PC-9 (cell line): ENCODE measurements at regions of chrX and their contacts with region 1.

Region 1: DNA sequence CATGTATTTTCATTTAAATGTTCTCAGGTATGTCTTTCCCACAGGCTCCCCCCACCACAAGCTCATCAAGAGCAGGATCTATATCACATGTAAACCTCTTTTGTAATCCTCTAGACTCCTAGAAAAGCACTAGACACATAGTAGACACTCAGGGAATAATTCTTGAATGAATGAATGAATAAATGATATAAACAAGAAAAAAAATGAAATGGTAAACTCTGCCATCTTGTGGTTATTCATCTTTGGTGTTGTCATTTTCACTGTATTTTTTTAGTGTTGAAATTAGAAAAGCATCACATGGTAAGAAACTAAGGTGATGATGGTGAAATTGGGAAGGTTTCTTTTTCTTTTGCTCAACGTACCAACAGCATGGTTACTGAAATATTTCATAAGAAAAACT is 34.2 kb upstream of the C1GALT1C1 start:
- DNase-seq: peak in 1 of 2 experiments; percentile 50
- H3K4me3 ChIP-seq: no peak overlapping the region
- H3K27ac ChIP-seq: peak overlapping the region; percentile 43; the same call in 1 of the 2 replicates
- H3K4me1 ChIP-seq: peaks cover 44% of the 10 kb centered on the region
- H3K27me3 ChIP-seq: no peaks in the 10 kb centered on the region
- CTCF ChIP-seq: peak; percentile 57

Region 2: GRCh38 chrX:119655125-119655524 is 1009.0 kb before region 1 on chrX:
- CTCF ChIA-PET with region 1: no interaction called
- POLR2A ChIA-PET with region 1: interaction called, 10 read pairs
- intact Hi-C with region 1: no loop called
- DNase-seq: peak in 1 of 2 experiments; percentile 7
- H3K4me3 ChIP-seq: no peak overlapping the region
- H3K27ac ChIP-seq: no peak overlapping the region
- H3K4me1 ChIP-seq: peaks cover 18% of the 10 kb centered on the region
- H3K27me3 ChIP-seq: no peaks in the 10 kb centered on the region
- CTCF ChIP-seq: no peak

Region 3: GRCh38 chrX:120499301-120500072 is 164.6 kb before region 1 on chrX:
- CTCF ChIA-PET with region 1: no interaction called
- POLR2A ChIA-PET with region 1: no interaction called
- intact Hi-C with region 1: loop called (anchors 1 kb)
- DNase-seq: no peak
- H3K4me3 ChIP-seq: no peak overlapping the region
- H3K27ac ChIP-seq: no peak overlapping the region
- H3K4me1 ChIP-seq: peaks cover 9% of the 10 kb centered on the region
- H3K27me3 ChIP-seq: no peaks in the 10 kb centered on the region
- CTCF ChIP-seq: no peak

Region 4: DNA sequence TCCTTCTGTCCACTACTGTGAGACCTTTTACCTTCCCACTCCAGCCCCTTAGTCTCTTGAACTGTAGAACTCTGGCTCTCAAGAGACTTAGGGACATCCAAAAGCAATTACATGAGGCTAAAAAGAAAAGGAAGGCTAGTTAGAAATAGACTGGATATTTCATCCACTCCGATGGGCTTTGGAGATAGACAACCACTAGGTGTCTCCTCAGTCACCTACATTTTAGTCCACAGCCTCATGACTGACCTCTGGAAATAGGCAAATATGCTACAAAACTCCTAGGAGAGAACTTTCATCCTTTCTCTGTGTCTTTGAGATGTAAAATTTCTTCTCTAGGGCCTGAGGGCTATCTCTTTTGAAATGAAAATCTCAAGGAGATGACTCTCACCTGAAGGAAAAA is 149.8 kb before region 1 on chrX:
- CTCF ChIA-PET with region 1: no interaction called
- POLR2A ChIA-PET with region 1: no interaction called
- intact Hi-C with region 1: loop called (anchors 1 kb)
- DNase-seq: no peak
- H3K4me3 ChIP-seq: no peak overlapping the region
- H3K27ac ChIP-seq: peak overlapping the region; percentile 10; the same call in 1 of the 2 replicates
- H3K4me1 ChIP-seq: peaks cover 22% of the 10 kb centered on the region
- H3K27me3 ChIP-seq: no peaks in the 10 kb centered on the region
- CTCF ChIP-seq: peak; percentile 75

Region 5: DNA sequence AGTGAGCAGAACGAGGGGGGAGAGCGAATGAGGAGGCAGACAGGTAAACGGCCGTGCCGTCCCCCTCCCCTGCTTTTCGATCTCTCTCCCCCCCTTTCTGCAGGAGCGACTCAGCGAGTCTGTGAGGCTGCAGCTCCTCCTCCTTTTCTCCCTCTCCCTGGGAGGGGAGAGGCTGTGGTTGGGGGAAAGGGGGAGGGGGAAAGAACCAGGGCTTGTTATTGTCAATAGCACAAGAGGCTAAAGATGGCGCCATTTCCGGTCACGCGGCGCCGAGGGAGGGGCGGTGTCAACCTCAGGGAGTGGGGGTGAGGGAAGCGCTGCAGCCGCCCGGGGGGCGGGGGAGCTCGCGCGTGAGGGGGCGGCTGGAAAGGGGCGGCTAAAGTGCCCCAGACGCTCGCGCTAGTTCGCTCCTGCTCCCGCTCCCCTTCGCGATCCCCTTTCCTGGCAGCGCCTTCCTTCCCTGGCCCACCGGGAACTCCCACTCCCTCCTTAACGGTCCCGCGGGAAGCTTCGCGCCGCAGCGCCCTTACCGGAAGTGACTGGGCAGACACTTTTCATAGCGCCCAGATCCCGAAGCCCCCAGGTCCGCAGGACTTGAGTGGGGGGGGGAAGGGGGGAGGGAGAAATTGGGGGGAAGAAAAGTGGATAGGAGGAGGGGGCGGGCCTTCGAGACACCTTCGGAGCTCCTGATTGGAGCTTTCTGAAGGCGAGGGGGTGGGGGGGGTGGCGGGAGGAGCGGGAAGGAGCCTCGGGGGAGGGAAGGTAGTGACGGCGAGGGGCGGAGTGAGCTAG is 103.0 kb before region 1 on chrX and contains the start of gene CUL4B:
- CTCF ChIA-PET with region 1: no interaction called
- POLR2A ChIA-PET with region 1: no interaction called
- intact Hi-C with region 1: loop called (anchors 5 kb)
- DNase-seq: peak; percentile 94 to 95
- H3K4me3 ChIP-seq: peak within 1 kb of the TSS; percentile 92
- H3K27ac ChIP-seq: peak within 1 kb of the TSS; percentile 98
- H3K4me1 ChIP-seq: peaks cover 33% of the 10 kb centered on the region
- H3K27me3 ChIP-seq: no peaks in the 10 kb centered on the region
- CTCF ChIP-seq: 0 out of 2 replicates have a peak, but pooled peaks have one; percentile 24
- total RNA-seq, gene CUL4B: 98.6 and 154 TPM in 2 replicates

Region 6: DNA sequence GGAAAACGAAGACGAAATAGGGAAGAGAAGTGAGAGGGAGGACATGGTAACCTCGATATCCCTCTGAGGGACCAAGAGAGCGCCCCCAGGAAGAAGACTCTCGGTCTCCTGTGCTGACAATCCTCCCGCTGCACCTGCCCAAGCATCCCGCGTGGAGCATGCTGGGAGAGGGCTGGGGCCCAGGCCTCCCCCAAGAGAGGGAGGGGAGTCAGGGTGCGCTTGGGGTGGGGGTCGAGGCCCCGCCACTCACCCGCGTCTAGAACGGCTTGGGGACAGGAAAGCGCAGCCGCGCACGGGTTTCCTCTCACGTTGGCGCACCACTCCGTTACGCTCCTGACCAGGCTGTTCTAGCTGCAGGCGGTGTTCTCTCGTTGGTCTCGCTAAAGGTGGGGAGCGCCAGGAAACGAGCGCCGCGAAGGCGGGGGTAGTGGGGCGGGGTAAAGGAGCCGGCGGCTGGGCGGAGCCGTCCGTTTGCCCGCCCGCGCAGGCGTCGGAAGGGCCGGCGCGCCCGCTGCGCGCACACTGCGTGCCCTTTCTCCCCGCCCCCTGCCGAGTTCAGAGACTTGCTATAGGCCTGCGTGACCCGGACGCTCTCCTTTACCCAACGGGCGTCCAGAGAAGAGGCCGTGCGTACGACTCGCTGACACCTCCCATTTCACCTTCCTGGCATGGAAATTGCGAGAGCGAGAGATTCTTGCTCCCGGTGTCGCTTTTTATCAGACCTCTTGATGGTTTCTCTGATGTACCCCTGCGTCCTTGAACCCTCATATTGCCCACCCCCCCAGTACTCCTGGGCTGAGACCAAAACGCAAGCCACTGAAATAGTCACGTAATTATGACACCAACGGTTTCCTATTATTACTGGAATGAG is 34.2 kb before region 1 on chrX and contains the start of gene C1GALT1C1:
- CTCF ChIA-PET with region 1: interaction called, 4 read pairs
- POLR2A ChIA-PET with region 1: interaction called, 3 read pairs
- intact Hi-C with region 1: loop called (anchors 5 kb)
- DNase-seq: peak; percentile 92 to 98
- H3K4me3 ChIP-seq: peak within 1 kb of the TSS; percentile 77
- H3K27ac ChIP-seq: peak within 1 kb of the TSS; percentile 87
- H3K4me1 ChIP-seq: peaks cover 23% of the 10 kb centered on the region
- H3K27me3 ChIP-seq: no peaks in the 10 kb centered on the region
- CTCF ChIP-seq: no peak
- total RNA-seq, gene C1GALT1C1: 32.7 and 38.4 TPM in 2 replicates

Region 7: GRCh38 chrX:120769576-120770341 is 105.7 kb after region 1 on chrX:
- CTCF ChIA-PET with region 1: no interaction called
- POLR2A ChIA-PET with region 1: no interaction called
- intact Hi-C with region 1: loop called (anchors 2 kb)
- DNase-seq: peak; percentile 33 to 89
- H3K4me3 ChIP-seq: no peak overlapping the region
- H3K27ac ChIP-seq: peak overlapping the region; percentile 82
- H3K4me1 ChIP-seq: peaks cover 36% of the 10 kb centered on the region
- H3K27me3 ChIP-seq: no peaks in the 10 kb centered on the region
- CTCF ChIP-seq: peak; percentile 62